ENCODE measurements at regions of chr20 and their contacts with region 1.

Region 1: GRCh38 chr20:41701588-41702348 is 83.6 kb upstream of the CHD6 start:
- DNase-seq: peak; percentile 89
- H3K4me3 ChIP-seq: no peak overlapping the region
- H3K27ac ChIP-seq: peak overlapping the region; percentile 48
- H3K4me1 ChIP-seq: peaks cover 28% of the 10 kb centered on the region
- H3K27me3 ChIP-seq: no peaks in the 10 kb centered on the region
- CTCF ChIP-seq: no peak

Region 2: GRCh38 chr20:41717483-41717882 is 15.7 kb after region 1 on chr20:
- CTCF ChIA-PET with region 1: no interaction called
- POLR2A ChIA-PET with region 1: interaction called, 10 read pairs
- intact Hi-C with region 1: no loop called
- DNase-seq: peak; percentile 61
- H3K4me3 ChIP-seq: no peak overlapping the region
- H3K27ac ChIP-seq: no peak overlapping the region
- H3K4me1 ChIP-seq: peaks cover 18% of the 10 kb centered on the region
- H3K27me3 ChIP-seq: no peaks in the 10 kb centered on the region
- CTCF ChIP-seq: no peak

Region 3: GRCh38 chr20:41733151-41733550 is 31.4 kb after region 1 on chr20:
- CTCF ChIA-PET with region 1: no interaction called
- POLR2A ChIA-PET with region 1: no interaction called
- intact Hi-C with region 1: loop called (anchors 2 kb)
- DNase-seq: peak; percentile 73
- H3K4me3 ChIP-seq: no peak overlapping the region
- H3K27ac ChIP-seq: no peak overlapping the region
- H3K4me1 ChIP-seq: peaks cover 7% of the 10 kb centered on the region
- H3K27me3 ChIP-seq: no peaks in the 10 kb centered on the region
- CTCF ChIP-seq: no peak